ENCODE measurements at regions of chr10 and their contacts with region 1.

Region 1: GRCh38 chr10:92837456-92837855 is 10.9 kb upstream of the EXOC6 start:
- DNase-seq: no peak
- ATAC-seq: no peak
- H3K4me3 ChIP-seq: no peak overlapping the region
- H3K27ac ChIP-seq: no peak overlapping the region
- H3K4me1 ChIP-seq: peaks cover 14 to 16% of the 10 kb centered on the region in 2 experiments; a peak in 4 of 5 replicates
- H3K27me3 ChIP-seq: no peaks in the 10 kb centered on the region
- CTCF ChIP-seq: no peak
- EP300 ChIP-seq: no peak
- POLR2A ChIP-seq: no peak
- RAD21 ChIP-seq: no peak

Region 2: GRCh38 chr10:92657024-92657423 is 180.4 kb before region 1 on chr10:
- CTCF ChIA-PET with region 1: no interaction called
- POLR2A ChIA-PET with region 1: no interaction called
- in situ Hi-C with region 1: no loop called
- intact Hi-C with region 1: no loop called
- DNase-seq: no peak
- ATAC-seq: peak; percentile 43; the same call in 2 of the 3 replicates
- H3K4me3 ChIP-seq: no peak overlapping the region
- H3K27ac ChIP-seq: no peak overlapping the region
- H3K4me1 ChIP-seq: no peaks in the 10 kb centered on the region
- H3K27me3 ChIP-seq: no peaks in the 10 kb centered on the region
- CTCF ChIP-seq: no peak
- EP300 ChIP-seq: no peak
- POLR2A ChIP-seq: no peak
- RAD21 ChIP-seq: no peak

Region 3: DNA sequence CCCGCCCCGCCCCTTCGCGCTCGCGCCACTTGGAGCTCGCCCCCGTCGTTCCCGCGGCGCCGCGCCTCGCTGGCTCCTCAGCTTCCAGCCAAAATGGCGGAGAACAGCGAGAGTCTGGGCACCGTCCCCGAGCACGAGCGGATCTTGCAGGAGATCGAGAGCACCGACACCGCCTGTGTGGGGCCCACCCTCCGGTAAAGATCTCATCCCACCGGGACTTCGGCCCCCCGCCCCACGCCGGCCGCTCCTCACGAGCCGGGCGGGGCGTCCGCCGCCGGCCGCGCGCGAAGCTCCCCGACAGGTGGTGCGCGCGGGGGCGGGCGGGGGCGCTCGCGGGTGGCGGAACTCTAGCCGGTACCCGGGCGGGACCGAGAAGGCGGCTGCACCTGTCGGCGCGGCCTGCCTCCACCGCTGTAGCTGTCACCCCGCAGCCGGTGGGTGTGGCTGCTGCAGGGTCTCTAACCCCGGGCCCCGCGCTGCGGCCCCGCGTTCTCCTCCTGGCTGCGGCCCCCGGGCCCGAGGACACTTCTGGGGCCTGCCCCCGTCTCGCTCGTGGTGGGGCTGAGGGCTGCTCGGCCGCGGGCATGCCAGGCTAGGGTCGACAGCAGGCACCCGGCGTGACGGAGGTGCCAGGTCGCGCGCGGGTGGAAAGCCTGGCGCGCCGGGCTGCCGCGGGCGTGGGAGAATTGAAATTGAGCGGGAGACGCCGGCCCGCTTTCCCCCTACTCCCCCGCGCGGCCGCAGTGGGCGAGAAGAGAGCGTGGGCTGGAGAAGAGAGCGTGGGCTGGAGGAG is 11.2 kb after region 1 on chr10 and contains the start of gene EXOC6:
- CTCF ChIA-PET with region 1: no interaction called
- POLR2A ChIA-PET with region 1: interaction called, 10 read pairs
- in situ Hi-C with region 1: no loop called
- intact Hi-C with region 1: no loop called
- DNase-seq: peak; percentile 76 to 87 (median 81)
- ATAC-seq: peak; percentile 87
- H3K4me3 ChIP-seq: peak within 1 kb of the TSS; percentile 94
- H3K27ac ChIP-seq: peak within 1 kb of the TSS; percentile 92
- H3K4me1 ChIP-seq: peaks cover 9 to 13% of the 10 kb centered on the region in 2 experiments; a peak in 4 of 5 replicates
- H3K27me3 ChIP-seq: no peaks in the 10 kb centered on the region
- CTCF ChIP-seq: 0 out of 6 replicates have a peak, but pooled peaks of 1 of the 3 experiments have one; percentile 4
- EP300 ChIP-seq: no peak
- POLR2A ChIP-seq: peak; percentile 63; the same call in 1 of the 2 replicates
- RAD21 ChIP-seq: no peak
- polyA plus RNA-seq, gene EXOC6: 13.9 to 17.0 TPM

Measured in K562 (cell line).